ENCODE measurements at regions of chr6 and their contacts with region 1.

Region 1: GRCh38 chr6:7389451-7390225 is at the starts of genes CAGE1 and RIOK1:
- DNase-seq: peak; percentile 98
- H3K4me3 Mint-ChIP-seq: peak within 1 kb of the TSS; percentile 89
- H3K27ac Mint-ChIP-seq: peak within 1 kb of the TSS; percentile 97
- H3K4me1 Mint-ChIP-seq: peaks cover 36% of the 10 kb centered on the region
- H3K27me3 Mint-ChIP-seq: no peaks in the 10 kb centered on the region
- total RNA-seq, gene CAGE1: 0.12 to 0.22 TPM
- total RNA-seq, gene RIOK1: 33.5 to 38.7 TPM

Region 2: GRCh38 chr6:7137335-7138045 is 252.1 kb before region 1 on chr6:
- CTCF ChIA-PET with region 1: no interaction called
- POLR2A ChIA-PET with region 1: no interaction called
- intact Hi-C with region 1: loop called (anchors 5 kb)
- DNase-seq: peak; percentile 83
- H3K4me3 Mint-ChIP-seq: peak overlapping the region; percentile 68
- H3K27ac Mint-ChIP-seq: peak overlapping the region; percentile 86
- H3K4me1 Mint-ChIP-seq: peaks cover 71% of the 10 kb centered on the region
- H3K27me3 Mint-ChIP-seq: no peaks in the 10 kb centered on the region

Region 3: GRCh38 chr6:7276199-7276524 is 113.5 kb before region 1 on chr6:
- CTCF ChIA-PET with region 1: interaction called, 14 read pairs
- POLR2A ChIA-PET with region 1: interaction called, 4 read pairs
- intact Hi-C with region 1: loop called (anchors 1 kb)
- DNase-seq: no peak
- H3K4me3 Mint-ChIP-seq: no peak overlapping the region
- H3K27ac Mint-ChIP-seq: no peak overlapping the region
- H3K4me1 Mint-ChIP-seq: peaks cover 9% of the 10 kb centered on the region
- H3K27me3 Mint-ChIP-seq: peaks cover 2% of the 10 kb centered on the region

Region 4: DNA sequence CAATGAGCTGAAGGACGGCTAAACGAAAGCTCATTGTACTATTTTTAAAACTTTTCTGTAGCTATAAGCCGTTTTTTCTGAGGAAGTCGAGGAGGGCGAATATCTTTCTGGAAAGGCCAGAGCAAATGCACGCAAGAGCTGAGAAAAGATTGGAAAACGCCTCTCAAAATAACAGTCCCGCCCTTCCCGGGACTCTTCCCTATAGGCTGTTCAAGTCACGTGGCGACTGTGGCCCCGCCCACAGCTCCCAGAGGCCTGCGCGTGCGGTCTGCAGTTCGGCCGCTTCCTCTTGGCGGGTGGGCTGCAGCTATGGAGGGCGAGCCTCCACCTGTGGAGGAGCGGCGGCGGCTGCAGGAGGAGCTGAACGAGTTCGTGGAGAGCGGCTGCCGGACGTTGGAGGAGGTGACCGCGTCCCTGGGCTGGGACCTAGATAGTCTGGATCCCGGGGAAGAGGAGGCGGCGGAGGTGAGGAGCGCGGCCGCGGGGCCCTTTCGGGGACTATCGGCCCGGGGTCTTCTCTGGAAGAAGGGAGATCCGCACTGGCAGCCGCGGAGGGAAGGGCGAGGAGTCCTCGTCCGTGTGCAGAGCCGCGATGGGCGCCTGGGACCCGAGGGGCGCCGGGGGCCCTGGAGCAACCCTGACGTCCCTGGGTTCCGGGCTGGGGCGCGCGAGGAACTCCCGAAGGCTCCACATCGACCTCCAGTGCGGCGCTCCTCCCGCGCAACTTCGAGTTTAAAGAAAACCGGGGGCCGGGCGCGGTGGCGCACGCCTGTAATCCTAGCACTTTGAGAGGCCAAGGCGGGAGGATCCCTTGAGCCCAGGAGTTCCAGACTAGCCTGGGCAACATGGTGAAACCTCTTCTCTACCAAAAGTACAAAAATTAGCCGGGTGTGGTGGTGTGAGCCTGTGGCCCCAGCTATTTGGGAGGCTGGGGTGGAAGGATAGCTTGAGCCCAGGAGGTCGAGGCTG is 200.6 kb after region 1 on chr6 and contains the start of gene SNRNP48:
- CTCF ChIA-PET with region 1: no interaction called
- POLR2A ChIA-PET with region 1: interaction called, 8 read pairs
- intact Hi-C with region 1: loop called (anchors 1 kb)
- DNase-seq: peak; percentile 95
- H3K4me3 Mint-ChIP-seq: peak within 1 kb of the TSS; percentile 99
- H3K27ac Mint-ChIP-seq: peak within 1 kb of the TSS; percentile 94
- H3K4me1 Mint-ChIP-seq: peaks cover 40% of the 10 kb centered on the region
- H3K27me3 Mint-ChIP-seq: no peaks in the 10 kb centered on the region
- total RNA-seq, gene SNRNP48: 21.1 to 21.8 TPM

Region 5: GRCh38 chr6:7615611-7616383 is 226.2 kb after region 1 on chr6:
- CTCF ChIA-PET with region 1: no interaction called
- POLR2A ChIA-PET with region 1: no interaction called
- intact Hi-C with region 1: loop called (anchors 2 kb)
- DNase-seq: peak; percentile 35
- H3K4me3 Mint-ChIP-seq: no peak overlapping the region
- H3K27ac Mint-ChIP-seq: no peak overlapping the region
- H3K4me1 Mint-ChIP-seq: peaks cover 16% of the 10 kb centered on the region
- H3K27me3 Mint-ChIP-seq: peaks cover 4% of the 10 kb centered on the region

Measured in activated CD4-positive, alpha-beta memory T cell treated with anti-CD3 and anti-CD28 coated beads for 36 hours (primary cell).